ENCODE measurements at regions of chr17 and their contacts with region 1.

Region 1: DNA sequence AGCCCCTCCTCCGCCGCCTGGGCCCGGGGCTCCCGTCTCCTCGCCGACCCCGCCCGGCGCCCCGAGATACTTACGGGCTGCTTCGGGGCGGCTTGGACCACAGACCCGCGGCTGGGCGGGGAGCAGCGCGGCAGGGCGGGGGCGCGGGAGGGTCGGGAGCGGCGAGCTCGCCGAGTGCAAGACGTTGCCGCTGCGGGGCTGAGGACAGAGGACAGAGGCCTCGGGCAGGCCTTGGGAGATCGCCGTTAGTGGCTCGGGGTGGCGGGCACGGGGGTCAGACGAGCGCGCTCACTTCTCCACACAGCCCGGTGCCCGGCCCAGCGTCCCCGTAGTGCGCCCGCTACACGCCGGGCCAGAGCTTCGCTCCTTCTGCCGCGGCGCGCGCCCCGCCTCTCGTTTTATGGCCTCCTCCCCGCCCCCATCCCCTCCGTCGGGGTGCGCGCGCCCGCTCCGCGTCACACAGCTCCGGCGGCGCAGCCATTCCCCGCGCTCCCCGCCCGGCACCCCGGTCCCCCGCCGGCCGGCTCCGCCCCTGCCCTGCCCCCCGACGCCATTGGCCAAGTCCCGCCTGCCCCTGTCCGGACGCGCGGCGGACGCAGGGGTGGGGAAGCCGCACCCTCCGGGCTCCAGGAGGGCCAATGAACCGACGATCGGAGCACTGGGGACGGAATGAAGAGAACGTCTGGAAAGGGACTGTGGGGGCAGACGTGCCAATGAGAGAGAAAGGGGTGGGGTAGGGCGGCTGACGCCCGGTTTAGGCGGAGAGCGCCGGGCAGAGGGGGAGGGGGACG is at the start of gene TOB1:
- DNase-seq: peak; percentile 98
- H3K4me3 ChIP-seq: peak within 1 kb of the TSS; percentile 88 to 97 (median 94)
- H3K27ac ChIP-seq: peak within 1 kb of the TSS; percentile 97
- H3K4me1 ChIP-seq: peaks cover 16% of the 10 kb centered on the region
- H3K27me3 ChIP-seq: no peaks in the 10 kb centered on the region
- CTCF ChIP-seq: no peak
- total RNA-seq, gene TOB1: 51.2 to 149 TPM

Region 2: DNA sequence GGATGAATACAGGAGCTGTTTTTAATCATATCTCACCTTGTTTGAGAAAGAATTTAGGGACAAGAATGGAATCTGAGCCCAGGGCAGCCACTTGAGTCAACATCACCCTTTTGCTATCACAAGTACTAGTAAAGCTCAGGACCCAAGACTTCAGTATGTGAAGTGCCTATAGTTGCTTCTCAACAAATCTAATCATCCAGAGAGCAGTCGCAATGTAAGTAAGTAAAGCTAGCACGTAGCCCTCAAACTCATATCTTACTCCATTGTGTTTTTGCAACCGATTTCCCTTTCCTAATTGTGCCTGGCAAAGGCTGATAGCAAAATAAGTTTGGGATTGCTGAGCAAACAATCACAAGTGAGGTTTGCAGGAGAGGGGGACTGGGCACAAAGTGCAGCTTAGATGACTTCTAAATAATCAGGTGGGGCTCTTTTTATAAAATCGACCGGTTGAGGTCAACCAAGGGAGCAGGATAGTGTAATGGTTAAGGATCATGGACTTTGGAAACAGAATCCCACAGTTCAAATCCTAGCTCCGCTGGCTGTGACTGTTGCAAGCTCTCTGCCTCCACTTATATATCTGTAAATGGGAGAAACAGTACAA is 13.1 kb before region 1 on chr17:
- CTCF ChIA-PET with region 1: interaction called, 3 read pairs
- dilution Hi-C with region 1: no loop called
- in situ Hi-C with region 1: no loop called
- intact Hi-C with region 1: loop called (anchors 1 kb)
- DNase-seq: no peak
- H3K4me3 ChIP-seq: no peak overlapping the region
- H3K27ac ChIP-seq: no peak overlapping the region
- H3K4me1 ChIP-seq: peaks cover 12% of the 10 kb centered on the region
- H3K27me3 ChIP-seq: no peaks in the 10 kb centered on the region
- CTCF ChIP-seq: no peak

Region 3: DNA sequence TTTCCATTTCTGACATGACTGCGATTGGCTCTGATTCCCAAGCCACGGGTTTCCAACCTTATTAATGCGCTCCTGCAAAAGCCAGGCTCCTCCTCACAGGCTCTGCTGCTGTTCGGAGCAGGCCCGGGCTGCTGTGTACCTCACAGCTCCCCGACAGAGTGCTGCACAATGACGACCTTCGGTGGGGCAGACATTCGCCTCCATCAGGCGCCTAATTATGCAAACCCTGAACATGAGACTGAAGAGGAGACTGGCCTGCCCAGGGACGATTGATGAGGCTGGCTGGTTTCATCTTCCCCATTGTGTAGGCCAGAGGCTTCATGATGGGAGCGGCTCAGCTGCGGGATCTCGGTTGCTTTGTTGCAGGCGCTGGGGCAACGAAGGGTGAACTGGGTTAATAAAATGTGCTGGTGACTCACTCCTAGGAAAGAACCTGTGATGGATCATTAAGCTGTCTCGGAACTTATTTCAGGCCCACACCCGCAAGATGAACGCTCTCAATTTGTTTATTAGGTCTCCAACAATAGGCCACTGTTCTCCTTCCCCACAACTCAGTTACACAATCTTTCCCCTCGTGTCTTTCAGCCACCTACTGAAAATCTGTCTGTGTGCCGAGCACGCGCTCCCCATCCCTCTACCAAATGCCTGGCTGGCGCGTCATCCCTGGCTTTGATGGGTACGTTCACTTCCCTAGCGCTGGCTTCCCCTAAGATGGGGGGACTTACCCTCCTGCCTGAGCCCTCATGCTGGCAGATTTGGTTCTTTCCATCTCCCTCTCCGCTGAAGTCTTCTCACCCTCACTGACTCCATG is 27.2 kb after region 1 on chr17:
- CTCF ChIA-PET with region 1: no interaction called
- dilution Hi-C with region 1: no loop called
- in situ Hi-C with region 1: no loop called
- intact Hi-C with region 1: loop called (anchors 1 kb)
- DNase-seq: peak; percentile 99
- H3K4me3 ChIP-seq: peak overlapping the region in 1 of 3 experiments; percentile 26
- H3K27ac ChIP-seq: peak overlapping the region; percentile 98
- H3K4me1 ChIP-seq: peaks cover 33% of the 10 kb centered on the region
- H3K27me3 ChIP-seq: no peaks in the 10 kb centered on the region
- CTCF ChIP-seq: no peak

Region 4: GRCh38 chr17:50919321-50920085 is 53.3 kb after region 1 on chr17:
- CTCF ChIA-PET with region 1: no interaction called
- dilution Hi-C with region 1: no loop called
- in situ Hi-C with region 1: no loop called
- intact Hi-C with region 1: loop called (anchors 1 kb)
- DNase-seq: peak; percentile 91
- H3K4me3 ChIP-seq: no peak overlapping the region
- H3K27ac ChIP-seq: peak overlapping the region; percentile 83
- H3K4me1 ChIP-seq: peaks cover 57% of the 10 kb centered on the region
- H3K27me3 ChIP-seq: no peaks in the 10 kb centered on the region
- CTCF ChIP-seq: no peak

Region 5: GRCh38 chr17:50956750-50957523 is 90.8 kb after region 1 on chr17:
- CTCF ChIA-PET with region 1: interaction called, 3 read pairs
- dilution Hi-C with region 1: no loop called
- in situ Hi-C with region 1: loop called in 1 of 2 experiments (anchors 5 kb)
- intact Hi-C with region 1: loop called (anchors 1 kb)
- DNase-seq: peak; percentile 39
- H3K4me3 ChIP-seq: no peak overlapping the region
- H3K27ac ChIP-seq: no peak overlapping the region
- H3K4me1 ChIP-seq: peaks cover 41% of the 10 kb centered on the region
- H3K27me3 ChIP-seq: no peaks in the 10 kb centered on the region
- CTCF ChIP-seq: peak; percentile 79 to 87